Aorta (tissue), 5 donors: ENCODE measurements at regions of chr2 and their contacts with region 1.

Region 1: DNA sequence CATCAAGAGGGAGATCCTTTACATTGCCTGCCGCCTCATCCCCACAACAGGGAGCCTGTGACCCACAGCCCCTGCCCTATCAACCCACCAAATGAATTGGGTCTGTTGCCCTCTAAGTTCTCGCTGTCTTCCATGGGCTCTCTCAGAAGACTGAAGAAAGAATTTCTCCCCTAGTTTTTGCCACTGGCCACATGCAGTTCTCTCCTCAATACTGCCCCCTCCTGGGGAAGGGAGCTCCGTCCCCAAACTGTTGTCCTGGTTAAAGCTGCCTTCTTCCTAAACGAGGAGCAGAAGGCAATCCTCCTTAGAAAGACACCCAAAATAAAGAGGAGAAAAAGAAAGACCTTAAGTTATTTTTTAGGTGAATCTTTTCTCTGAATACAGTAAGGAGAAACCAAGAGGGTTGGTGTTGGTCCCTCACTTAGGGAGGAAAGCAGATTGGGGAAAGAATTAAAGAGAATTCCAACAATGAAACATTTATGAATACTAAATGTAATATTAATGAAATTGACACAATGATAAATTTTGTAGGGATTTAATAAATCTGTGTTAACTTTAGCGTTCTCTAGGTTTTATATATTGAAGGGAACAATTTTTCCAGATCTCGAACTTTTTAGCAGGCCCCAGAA is 31.1 kb upstream of the SATB2 start:
- DNase-seq: no peak
- ATAC-seq: peak; percentile 53
- H3K4me3 ChIP-seq: no peak overlapping the region
- H3K27ac ChIP-seq: no peak overlapping the region
- H3K4me1 ChIP-seq: no peaks in the 10 kb centered on the region
- H3K27me3 ChIP-seq: peaks cover 0 to 2% of the 10 kb centered on the region in 2 donors

Region 2: GRCh38 chr2:198374375-198375082 is 1114.4 kb before region 1 on chr2:
- intact Hi-C with region 1: loop called (anchors 5 to 10 kb)
- DNase-seq: no peak
- ATAC-seq: no peak
- H3K4me3 ChIP-seq: no peak overlapping the region
- H3K27ac ChIP-seq: no peak overlapping the region
- H3K4me1 ChIP-seq: no peaks in the 10 kb centered on the region
- H3K27me3 ChIP-seq: no peaks in the 10 kb centered on the region

Region 3: DNA sequence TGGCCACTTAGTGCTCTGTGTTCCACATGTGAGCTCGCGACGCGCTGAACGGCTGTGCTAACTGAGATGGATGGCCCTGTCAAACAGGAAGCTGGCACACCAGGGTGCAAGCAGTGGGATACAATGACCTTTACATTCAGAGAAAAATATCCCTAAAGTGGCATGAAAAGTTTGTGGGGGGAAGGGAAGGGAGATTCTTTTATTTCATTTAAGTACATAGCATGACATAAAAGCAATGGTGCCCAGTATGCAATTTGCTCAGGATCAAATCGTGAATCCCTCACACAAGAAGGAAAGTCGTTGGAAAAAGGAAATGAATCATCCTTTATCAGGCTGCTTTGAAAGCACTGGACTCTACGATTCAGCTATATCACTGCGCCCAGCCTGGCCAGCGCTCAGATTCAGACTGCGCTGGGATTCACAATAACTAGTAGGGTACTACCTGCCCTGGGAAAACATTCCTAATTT is 57.1 kb before region 1 on chr2:
- intact Hi-C with region 1: no loop called
- DNase-seq: no peak
- ATAC-seq: no peak
- H3K4me3 ChIP-seq: no peak overlapping the region
- H3K27ac ChIP-seq: no peak overlapping the region
- H3K4me1 ChIP-seq: no peaks in the 10 kb centered on the region
- H3K27me3 ChIP-seq: no peaks in the 10 kb centered on the region